MCF 10A (cell line): ENCODE measurements at regions of chr1 and their contacts with region 1.

Region 1: DNA sequence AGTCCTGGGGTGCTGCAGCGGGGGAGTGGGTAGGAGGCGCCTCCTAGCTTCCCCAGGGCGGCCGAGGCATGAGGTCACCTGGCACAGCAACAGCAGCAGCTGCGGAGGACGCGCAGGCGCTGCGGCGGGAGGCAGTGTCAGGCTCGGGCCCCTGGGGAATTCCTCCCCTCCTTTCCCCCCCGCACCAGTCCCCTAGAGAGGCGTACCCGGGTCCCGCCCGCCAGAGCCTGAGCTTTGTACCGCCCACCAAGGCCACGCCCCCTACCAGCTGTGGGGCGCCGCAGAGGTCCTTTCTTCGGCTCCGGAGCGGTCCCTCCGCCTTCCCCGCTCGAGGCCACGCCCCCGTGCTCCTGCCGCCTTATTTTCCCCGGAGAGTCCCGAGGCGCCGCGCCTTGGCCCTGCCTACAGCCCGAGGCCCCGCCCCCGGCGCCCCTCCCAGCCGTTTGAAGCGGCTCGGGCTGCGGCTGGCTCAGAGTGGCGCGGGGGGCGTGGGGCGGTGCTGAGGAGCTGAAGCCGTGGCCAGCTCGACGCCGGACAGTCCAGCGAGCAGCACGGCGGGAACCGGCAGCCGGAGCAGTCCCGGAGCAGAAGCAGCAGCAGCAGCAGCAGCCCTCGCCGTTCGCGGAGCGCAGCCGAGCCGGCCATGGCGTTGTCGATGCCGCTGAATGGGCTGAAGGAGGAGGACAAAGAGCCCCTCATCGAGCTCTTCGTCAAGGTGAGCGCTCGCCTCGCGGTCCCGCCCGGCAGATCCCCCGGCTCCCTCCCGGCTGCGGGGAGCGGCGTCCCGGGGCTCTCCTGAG is at the start of gene CLIC4:
- DNase-seq: peak; percentile 98
- H3K4me3 Mint-ChIP-seq: peak within 1 kb of the TSS; percentile 89
- H3K27ac Mint-ChIP-seq: peak within 1 kb of the TSS; percentile 94
- H3K4me1 Mint-ChIP-seq: peaks cover 16% of the 10 kb centered on the region
- H3K27me3 Mint-ChIP-seq: no peaks in the 10 kb centered on the region
- CTCF ChIP-seq: no peak
- total RNA-seq, gene CLIC4: 242 and 281 TPM in 2 replicates

Region 2: DNA sequence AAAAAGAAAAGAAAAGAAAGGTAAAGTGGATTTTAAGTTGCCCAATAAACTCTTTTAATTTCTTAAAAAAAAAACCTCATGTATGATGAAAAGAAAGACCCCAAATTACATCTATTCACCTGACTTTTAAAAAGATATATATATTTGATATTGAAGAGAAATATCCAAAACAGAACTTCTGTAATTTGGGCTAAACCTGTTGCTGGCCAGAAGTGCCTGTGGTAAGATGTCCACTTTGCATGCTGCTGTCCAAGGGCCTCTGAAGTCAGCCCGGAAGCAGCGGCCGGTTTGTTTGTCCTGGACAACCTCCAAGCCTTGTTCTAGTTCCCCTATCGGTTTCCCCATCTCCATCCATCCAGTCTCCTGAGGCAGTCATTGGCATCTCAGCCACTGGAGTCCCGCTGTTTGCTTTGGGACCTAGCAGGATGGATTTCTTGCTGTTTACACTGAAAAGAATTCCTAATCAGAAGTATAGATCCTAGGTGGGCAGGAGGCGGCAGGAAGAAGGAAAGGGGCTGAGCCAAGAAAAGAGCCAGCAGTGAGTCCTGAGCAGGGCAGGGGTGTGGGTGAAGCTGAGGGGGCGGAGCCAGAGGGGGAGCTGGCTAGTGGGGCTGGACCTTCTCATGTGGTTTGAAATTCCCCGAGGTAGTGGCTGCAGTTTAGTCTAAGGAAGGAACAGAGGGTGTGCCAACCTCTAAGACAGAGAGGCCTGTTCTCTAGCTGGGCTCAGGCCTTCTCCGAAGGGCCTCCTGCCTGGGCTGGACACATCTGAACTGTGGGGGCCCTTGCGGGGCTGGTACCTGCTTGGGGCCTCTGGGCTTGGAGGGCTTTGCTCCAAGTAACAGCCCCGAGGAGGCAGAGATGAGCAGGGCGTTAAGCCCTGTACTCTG is 186.0 kb before region 1 on chr1:
- CTCF ChIA-PET with region 1: no interaction called
- POLR2A ChIA-PET with region 1: no interaction called
- intact Hi-C with region 1: no loop called
- DNase-seq: peak; percentile 87
- H3K4me3 Mint-ChIP-seq: no peak overlapping the region
- H3K27ac Mint-ChIP-seq: no peak overlapping the region
- H3K4me1 Mint-ChIP-seq: peaks cover 10% of the 10 kb centered on the region
- H3K27me3 Mint-ChIP-seq: peaks cover 11% of the 10 kb centered on the region
- CTCF ChIP-seq: no peak

Region 3: GRCh38 chr1:24642481-24643361 is 102.4 kb before region 1 on chr1 and contains the start of gene SRRM1:
- CTCF ChIA-PET with region 1: no interaction called
- POLR2A ChIA-PET with region 1: interaction called, 9 read pairs
- intact Hi-C with region 1: loop called (anchors 5 kb)
- DNase-seq: peak; percentile 100
- H3K4me3 Mint-ChIP-seq: peak within 1 kb of the TSS; percentile 98
- H3K27ac Mint-ChIP-seq: peak within 1 kb of the TSS; percentile 99
- H3K4me1 Mint-ChIP-seq: peaks cover 25% of the 10 kb centered on the region
- H3K27me3 Mint-ChIP-seq: no peaks in the 10 kb centered on the region
- CTCF ChIP-seq: no peak
- total RNA-seq, gene SRRM1: 154 and 171 TPM in 2 replicates

Region 4: DNA sequence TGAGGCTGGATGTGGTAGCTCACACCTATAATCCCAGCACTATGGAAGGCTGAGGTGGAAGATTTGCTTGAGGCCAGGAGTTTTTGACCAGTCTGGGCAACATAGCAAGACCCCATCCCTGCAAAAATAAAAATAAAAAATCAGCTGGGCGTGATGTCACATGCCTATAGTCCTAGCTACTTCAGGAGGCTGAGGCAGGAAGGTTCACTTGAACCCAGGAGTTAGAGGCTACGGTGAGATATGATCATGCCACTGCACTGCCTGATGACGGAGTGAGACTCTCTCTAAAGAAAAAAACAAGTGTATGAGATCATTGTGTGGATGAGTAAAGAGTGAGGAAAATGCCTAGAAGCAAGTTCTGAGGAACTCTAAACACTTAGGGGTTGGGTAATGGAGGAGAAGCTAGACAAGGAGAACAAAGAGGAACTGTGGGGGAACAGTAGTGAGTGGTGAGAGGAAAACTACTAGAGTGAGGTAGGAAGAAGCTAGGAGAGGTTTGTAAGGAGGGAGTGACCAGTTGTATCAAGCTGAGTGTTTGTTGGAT is 17.1 kb after region 1 on chr1:
- CTCF ChIA-PET with region 1: interaction called, 3 read pairs
- POLR2A ChIA-PET with region 1: interaction called, 50 read pairs
- intact Hi-C with region 1: no loop called
- DNase-seq: peak; percentile 38
- H3K4me3 Mint-ChIP-seq: no peak overlapping the region
- H3K27ac Mint-ChIP-seq: no peak overlapping the region
- H3K4me1 Mint-ChIP-seq: peaks cover 9% of the 10 kb centered on the region
- H3K27me3 Mint-ChIP-seq: no peaks in the 10 kb centered on the region
- CTCF ChIP-seq: no peak

Region 5: DNA sequence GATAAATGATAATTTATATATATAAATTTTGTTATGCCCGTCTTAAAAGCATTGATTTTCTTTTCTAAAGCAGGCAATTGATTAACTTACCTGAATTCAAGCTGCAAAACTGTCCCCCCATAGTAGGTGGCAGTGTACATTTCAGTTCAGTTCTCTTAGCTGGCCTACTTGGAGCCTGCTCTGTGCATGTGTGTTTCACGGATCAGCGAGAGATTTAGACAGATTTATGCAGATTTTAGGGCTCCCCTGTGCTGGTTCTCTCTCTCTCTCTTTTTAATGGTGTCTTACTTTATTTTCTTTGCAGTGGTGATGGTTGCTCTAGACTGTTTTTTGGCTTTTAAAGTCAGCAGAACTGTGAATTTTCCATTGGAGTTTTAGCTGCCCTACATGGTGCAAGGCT is 30.8 kb after region 1 on chr1:
- CTCF ChIA-PET with region 1: interaction called, 3 read pairs
- POLR2A ChIA-PET with region 1: interaction called, 50 read pairs
- intact Hi-C with region 1: no loop called
- DNase-seq: no peak
- H3K4me3 Mint-ChIP-seq: no peak overlapping the region
- H3K27ac Mint-ChIP-seq: peak overlapping the region; percentile 59
- H3K4me1 Mint-ChIP-seq: peaks cover 10% of the 10 kb centered on the region
- H3K27me3 Mint-ChIP-seq: no peaks in the 10 kb centered on the region
- CTCF ChIP-seq: no peak

Region 6: DNA sequence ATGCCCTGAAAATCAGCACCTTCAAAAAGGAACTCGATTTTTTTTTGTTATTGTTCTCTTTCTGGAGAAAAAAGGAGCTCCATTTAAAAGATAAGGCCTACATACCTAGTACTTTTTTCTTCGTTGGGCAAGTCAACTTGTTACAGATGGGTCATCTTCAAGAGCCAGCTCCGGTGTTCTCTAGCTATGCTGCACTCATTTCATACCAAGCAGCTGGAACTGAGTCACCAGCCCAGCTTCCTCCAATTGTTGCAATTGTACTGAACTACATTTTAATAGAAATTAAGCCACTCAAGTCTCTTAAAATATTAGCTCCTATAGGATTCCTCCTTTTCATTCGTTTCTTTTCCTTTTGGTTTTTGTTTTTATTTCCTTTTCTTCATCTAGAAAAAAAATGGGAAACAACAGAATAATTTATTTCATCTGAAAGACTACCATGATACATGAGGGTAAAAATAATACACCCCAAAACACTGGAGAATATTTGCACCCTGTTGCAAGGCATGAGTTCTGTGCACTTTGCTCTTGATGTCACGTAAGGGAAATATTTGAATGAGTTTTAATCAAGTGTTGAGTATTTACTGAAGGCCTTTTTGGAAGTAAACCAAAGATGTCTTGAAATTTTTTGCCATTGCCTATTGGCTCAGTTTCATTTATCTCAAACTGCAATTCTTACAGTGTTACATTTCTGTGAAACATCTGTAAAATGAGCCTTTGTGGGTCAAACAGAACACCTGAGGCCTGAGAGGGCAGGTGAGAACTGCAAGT is 60.6 kb after region 1 on chr1:
- CTCF ChIA-PET with region 1: no interaction called
- POLR2A ChIA-PET with region 1: interaction called, 19 read pairs
- intact Hi-C with region 1: no loop called
- DNase-seq: peak; percentile 73
- H3K4me3 Mint-ChIP-seq: no peak overlapping the region
- H3K27ac Mint-ChIP-seq: no peak overlapping the region
- H3K4me1 Mint-ChIP-seq: peaks cover 19% of the 10 kb centered on the region
- H3K27me3 Mint-ChIP-seq: no peaks in the 10 kb centered on the region
- CTCF ChIP-seq: no peak

Region 7: GRCh38 chr1:24984800-24985522 is 239.8 kb after region 1 on chr1:
- CTCF ChIA-PET with region 1: no interaction called
- POLR2A ChIA-PET with region 1: no interaction called
- intact Hi-C with region 1: no loop called
- DNase-seq: no peak
- H3K4me3 Mint-ChIP-seq: no peak overlapping the region
- H3K27ac Mint-ChIP-seq: no peak overlapping the region
- H3K4me1 Mint-ChIP-seq: no peaks in the 10 kb centered on the region
- H3K27me3 Mint-ChIP-seq: peaks cover 22% of the 10 kb centered on the region
- CTCF ChIP-seq: no peak

Region 8: DNA sequence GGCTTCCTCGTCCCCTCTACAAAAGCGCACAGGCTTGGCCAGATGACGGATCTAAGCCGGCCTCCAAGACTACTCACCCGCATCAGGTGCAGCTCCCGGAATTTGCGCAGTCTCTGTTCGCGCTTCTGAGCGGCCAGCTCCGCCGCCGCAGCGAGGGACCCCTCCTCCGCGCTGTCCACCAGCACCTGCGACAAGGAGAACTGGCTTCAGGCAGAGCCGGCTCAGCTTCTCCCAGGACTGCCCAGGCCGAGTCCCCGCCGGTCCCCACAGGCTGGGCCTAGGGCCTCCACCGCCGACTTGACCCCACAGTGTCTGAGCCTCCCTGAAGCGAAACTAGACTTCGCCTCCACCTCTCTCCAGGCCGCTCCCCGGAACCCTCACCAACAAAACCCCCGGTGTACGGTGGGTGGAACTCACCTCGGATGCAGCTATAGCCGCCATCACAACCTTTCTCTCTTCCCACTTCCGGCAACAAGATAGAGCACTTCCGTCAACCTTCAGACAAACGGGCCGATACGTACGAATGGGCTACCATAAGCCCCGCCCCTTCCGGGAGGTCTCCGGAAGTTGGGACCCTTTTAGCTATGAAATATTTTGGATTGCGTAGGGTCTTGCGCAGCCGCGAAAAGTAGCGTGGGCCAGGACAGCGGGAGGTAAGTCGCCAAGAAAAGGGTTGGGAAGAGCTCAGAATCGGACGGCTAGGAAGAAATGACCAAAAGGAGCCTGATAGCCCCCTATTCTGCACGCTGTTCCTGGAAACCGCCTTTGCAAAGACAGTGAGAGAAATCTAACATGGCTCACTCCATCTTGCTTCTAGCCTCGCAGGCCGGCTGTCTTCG is 487.1 kb after region 1 on chr1 and contains the start of gene SYF2:
- CTCF ChIA-PET with region 1: no interaction called
- POLR2A ChIA-PET with region 1: interaction called, 13 read pairs
- intact Hi-C with region 1: no loop called
- DNase-seq: peak; percentile 91
- H3K4me3 Mint-ChIP-seq: no peak within 1 kb of the TSS
- H3K27ac Mint-ChIP-seq: no peak within 1 kb of the TSS
- H3K4me1 Mint-ChIP-seq: peaks cover 7% of the 10 kb centered on the region
- H3K27me3 Mint-ChIP-seq: no peaks in the 10 kb centered on the region
- CTCF ChIP-seq: no peak
- total RNA-seq, gene SYF2: 40.5 and 43.0 TPM in 2 replicates

Region 9: GRCh38 chr1:25616095-25616986 is 871.2 kb after region 1 on chr1 and contains the start of gene MAN1C1:
- CTCF ChIA-PET with region 1: no interaction called
- POLR2A ChIA-PET with region 1: no interaction called
- intact Hi-C with region 1: no loop called
- DNase-seq: peak; percentile 78
- H3K4me3 Mint-ChIP-seq: peak within 1 kb of the TSS; percentile 60
- H3K27ac Mint-ChIP-seq: no peak within 1 kb of the TSS
- H3K4me1 Mint-ChIP-seq: peaks cover 13% of the 10 kb centered on the region
- H3K27me3 Mint-ChIP-seq: peaks cover 45% of the 10 kb centered on the region
- CTCF ChIP-seq: no peak
- total RNA-seq, gene MAN1C1: not detected in 2 replicates